BJ (cell line): ENCODE measurements at regions of chr2 and their contacts with region 1.

Region 1: DNA sequence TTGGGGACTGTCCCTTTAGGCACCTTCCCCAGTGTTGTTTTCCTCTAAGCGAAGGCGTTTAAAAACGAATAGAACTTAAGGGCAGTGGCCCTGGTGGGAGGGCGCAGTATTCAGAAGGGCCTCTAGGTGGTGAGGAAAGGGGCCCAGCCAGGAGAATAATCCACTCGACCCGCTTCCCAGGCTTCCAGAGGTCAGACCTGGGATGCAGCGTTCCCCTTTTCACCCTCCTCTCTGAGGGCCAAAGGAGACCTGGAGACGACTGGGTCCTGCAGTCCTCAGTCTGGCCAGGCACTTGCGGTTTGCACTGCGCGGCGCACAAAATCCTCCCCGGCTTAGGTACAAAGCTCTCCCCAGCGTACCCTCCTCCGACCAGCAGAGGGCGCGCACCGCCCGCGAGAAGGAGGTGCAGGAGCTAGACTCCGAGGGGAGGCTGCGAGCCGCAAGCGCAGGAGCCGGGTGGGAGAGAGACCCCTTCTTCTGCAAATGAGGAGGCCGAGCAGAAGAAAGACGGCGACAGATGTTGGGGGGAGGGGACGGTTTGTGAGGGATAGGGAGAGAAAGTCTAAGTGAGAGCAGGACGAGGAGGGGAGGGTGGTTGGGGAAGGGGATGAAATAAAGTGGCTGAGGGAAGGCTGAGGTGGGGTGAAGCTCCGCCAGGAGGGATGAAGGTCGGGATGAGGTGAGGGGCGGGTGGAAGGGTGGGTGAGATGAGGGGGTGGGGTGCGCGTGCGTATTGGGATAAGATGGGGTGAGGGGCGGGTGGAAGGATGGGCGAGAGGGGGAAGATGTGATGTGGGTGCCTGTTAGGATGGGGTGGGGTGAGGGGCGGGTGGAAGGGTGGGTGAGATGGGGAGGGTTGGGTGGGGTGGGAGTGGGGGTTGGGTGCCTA is 4.9 kb downstream of the FEV start:
- DNase-seq: no peak
- H3K4me3 ChIP-seq: no peak overlapping the region
- H3K27me3 ChIP-seq: peaks cover 53% of the 10 kb centered on the region
- CTCF ChIP-seq: peak; percentile 97

Region 2: DNA sequence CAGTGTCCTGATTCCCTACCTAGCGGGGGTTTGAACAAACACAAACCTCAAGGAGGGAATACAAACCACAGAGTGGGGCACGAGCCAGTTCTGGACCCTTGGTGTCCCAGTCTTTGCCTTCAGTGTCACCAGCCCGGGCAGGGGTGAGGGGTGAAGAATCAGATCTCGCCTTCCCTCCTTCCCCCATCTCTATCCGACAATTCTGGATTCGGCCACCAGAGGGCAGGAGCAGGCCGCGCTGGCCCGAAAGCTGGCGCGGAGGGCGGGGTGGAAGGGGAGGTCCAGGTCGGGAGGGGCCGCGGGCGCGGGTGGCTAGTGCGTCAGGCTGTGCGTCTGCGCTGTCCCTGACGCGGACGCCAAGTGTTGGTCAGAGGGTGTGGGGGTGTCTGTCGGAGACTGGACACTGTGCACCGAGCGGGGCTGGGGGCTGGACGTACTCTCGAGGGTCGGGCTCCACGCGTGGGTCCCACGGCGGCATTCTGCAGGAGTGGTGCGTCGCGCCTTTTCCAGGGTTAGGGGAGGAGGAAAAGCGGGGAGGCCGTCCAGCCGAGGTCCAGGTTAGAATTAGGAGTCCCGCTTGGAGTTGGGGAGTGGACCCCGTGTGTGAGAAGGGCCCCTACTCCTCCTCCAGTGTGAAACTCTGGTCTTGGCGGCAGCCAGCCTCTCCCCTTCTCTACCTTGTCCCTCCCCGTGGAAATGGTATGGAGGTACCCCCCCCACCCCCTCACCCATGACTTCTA is 16.1 kb after region 1 on chr2:
- CTCF ChIA-PET with region 1: interaction called, 36 read pairs
- POLR2A ChIA-PET with region 1: no interaction called
- DNase-seq: no peak
- H3K4me3 ChIP-seq: peak overlapping the region; percentile 40
- H3K27me3 ChIP-seq: peaks cover 69% of the 10 kb centered on the region
- CTCF ChIP-seq: peak; percentile 96

Region 3: GRCh38 chr2:219029829-219030165 is 49.7 kb after region 1 on chr2:
- CTCF ChIA-PET with region 1: interaction called, 10 read pairs
- POLR2A ChIA-PET with region 1: no interaction called
- DNase-seq: no peak
- H3K4me3 ChIP-seq: no peak overlapping the region
- H3K27me3 ChIP-seq: peaks cover 22% of the 10 kb centered on the region
- CTCF ChIP-seq: peak; percentile 97

Region 4: GRCh38 chr2:219079417-219079816 is 99.3 kb after region 1 on chr2:
- CTCF ChIA-PET with region 1: no interaction called
- POLR2A ChIA-PET with region 1: no interaction called
- DNase-seq: no peak
- H3K4me3 ChIP-seq: no peak overlapping the region
- H3K27me3 ChIP-seq: no peaks in the 10 kb centered on the region
- CTCF ChIP-seq: no peak

Region 5: GRCh38 chr2:219155054-219155644 is 175.1 kb after region 1 on chr2:
- CTCF ChIA-PET with region 1: interaction called, 22 read pairs
- POLR2A ChIA-PET with region 1: no interaction called
- DNase-seq: no peak
- H3K4me3 ChIP-seq: no peak overlapping the region
- H3K27me3 ChIP-seq: no peaks in the 10 kb centered on the region
- CTCF ChIP-seq: peak; percentile 48

Region 6: DNA sequence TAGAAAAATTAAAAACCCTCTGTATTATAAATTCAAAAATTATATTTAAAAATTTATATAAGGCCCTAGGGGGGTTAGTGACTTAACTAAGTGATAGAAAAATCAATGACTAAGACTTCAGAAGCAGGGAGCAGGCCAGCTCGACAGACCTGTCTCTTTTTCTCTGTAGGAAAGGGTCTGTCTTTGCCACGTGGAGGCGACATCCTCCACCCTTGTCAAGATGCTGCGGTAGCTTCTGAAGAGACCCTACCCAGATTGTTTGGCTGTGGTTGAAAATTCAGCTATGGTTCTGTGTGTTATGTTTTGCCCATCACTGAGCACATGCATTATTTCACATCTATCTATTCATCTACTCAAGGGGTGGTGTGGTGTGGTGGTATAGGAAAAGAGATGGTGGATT is 639.1 kb after region 1 on chr2:
- CTCF ChIA-PET with region 1: no interaction called
- POLR2A ChIA-PET with region 1: no interaction called
- DNase-seq: no peak
- H3K4me3 ChIP-seq: no peak overlapping the region
- H3K27me3 ChIP-seq: peaks cover 3% of the 10 kb centered on the region; the same call in 1 of the 2 replicates
- CTCF ChIP-seq: no peak